ENCODE measurements at regions of chr3 and their contacts with region 1.

Region 1: DNA sequence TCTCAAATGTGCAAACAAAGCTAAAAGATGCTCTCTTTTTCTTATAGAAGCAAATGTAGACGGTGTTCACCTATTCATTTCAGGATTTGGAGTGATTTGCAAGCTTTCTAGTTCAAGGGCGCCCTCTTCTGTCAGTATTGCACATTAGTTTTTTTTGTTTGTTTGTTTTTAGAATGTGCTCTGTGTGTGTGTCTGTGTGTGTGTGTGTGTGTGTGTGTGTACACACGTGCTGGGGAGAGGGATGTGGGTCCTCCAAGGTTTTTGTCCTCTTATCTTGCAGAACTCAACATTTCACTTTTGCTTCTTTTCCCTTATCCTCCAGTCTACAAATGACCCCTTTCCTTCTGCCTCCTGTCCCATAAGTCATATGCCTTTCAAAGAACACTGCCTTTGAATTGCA is 23.5 kb downstream of the DNAH1 start:
- DNase-seq: peak in 1 of 3 donors; percentile 78
- ATAC-seq: peak; percentile 86
- H3K4me3 ChIP-seq: no peak overlapping the region
- H3K4me1 ChIP-seq: no peaks in the 10 kb centered on the region
- CTCF ChIP-seq: peak; percentile 48

Region 2: GRCh38 chr3:52220380-52221026 is 119.1 kb before region 1 on chr3:
- intact Hi-C with region 1: loop called in 1 of 2 experiments (anchors 10 kb)
- DNase-seq: peak; percentile 82 to 92 (median 91)
- ATAC-seq: peak; percentile 64
- H3K4me3 ChIP-seq: no peak overlapping the region
- H3K4me1 ChIP-seq: peaks cover 34% of the 10 kb centered on the region
- CTCF ChIP-seq: peak; percentile 88

Region 3: DNA sequence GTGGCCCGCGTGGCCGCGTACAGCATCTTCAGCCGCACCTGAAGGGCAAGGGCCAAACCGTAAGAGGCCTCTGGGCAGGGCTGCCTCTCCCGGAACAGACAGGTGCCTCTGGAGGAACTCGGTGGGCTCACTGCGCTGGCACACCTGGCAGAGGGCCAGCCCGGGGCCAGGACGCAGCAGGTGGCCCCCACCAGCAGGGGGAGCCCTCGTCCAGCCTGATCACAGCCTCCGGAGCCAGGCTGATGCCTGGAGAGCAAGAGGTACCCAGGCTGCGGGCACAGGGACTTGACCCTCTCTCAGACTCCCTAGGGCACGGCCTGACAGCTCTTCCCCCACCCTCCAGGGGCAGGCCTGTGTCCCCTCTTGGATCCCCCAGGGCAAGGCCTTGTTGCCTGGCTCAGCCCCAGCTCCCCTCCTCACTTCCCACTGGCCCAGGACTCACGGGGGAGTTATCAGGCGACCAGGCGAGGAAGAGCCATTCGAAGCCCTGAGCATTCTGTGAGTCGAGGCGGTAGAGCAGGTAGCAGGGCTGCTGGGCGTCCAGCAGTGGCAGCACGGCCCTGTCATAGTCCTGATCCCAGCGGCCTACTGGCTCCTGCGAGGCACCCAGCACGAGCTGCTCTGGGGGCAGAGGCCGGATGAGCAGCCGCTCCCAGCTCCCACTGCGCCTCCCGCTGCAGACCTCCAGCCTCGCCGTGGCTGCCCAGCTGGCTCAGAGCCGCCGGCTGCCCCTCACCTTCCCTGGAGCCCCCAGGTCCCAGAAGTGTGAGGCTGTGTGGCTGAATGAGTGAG is 107.9 kb before region 1 on chr3:
- intact Hi-C with region 1: loop called (anchors 5 to 10 kb)
- DNase-seq: peak; percentile 83 to 89 (median 86)
- ATAC-seq: peak; percentile 89
- H3K4me3 ChIP-seq: no peak overlapping the region
- H3K4me1 ChIP-seq: no peaks in the 10 kb centered on the region
- CTCF ChIP-seq: peak; percentile 93

Region 4: DNA sequence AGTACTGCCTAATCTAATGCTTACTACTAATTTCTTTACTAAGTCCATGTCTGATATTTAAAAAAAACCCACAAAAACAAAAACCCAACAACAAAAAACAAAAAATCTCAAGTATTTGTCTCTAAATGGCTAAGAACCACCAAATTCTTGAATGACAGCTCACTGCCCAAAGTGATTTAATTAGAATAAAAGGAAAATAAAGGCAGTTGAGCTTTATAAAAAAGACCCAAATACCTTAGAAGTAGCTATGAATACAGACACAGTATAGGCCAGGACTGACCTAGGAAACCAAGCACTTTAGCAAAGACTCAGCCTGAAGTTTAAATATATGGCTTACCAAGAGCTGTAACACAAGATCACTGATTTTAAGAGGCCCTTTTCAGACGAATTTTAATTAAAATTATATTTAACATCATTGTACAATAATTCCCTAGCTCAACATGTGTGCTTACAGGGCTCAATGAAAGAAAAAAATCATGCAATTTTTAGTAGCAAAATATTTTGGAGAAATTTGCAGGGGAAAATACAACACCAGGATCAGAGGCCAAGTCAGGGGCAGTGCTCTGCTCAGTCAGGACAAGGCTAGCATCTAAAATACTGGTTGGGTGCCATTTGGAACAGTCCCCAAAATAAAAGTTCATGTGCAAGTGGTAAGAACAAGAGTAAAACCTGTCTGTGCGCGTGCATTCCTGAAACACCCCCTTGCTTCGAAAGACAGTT is 221.6 kb after region 1 on chr3:
- intact Hi-C with region 1: no loop called
- DNase-seq: no peak
- ATAC-seq: no peak
- H3K4me3 ChIP-seq: no peak overlapping the region
- H3K4me1 ChIP-seq: no peaks in the 10 kb centered on the region
- CTCF ChIP-seq: no peak

Measured in mucosa of descending colon (tissue), 3 donors.